ENCODE measurements at regions of chr16 and their contacts with region 1.

Region 1: DNA sequence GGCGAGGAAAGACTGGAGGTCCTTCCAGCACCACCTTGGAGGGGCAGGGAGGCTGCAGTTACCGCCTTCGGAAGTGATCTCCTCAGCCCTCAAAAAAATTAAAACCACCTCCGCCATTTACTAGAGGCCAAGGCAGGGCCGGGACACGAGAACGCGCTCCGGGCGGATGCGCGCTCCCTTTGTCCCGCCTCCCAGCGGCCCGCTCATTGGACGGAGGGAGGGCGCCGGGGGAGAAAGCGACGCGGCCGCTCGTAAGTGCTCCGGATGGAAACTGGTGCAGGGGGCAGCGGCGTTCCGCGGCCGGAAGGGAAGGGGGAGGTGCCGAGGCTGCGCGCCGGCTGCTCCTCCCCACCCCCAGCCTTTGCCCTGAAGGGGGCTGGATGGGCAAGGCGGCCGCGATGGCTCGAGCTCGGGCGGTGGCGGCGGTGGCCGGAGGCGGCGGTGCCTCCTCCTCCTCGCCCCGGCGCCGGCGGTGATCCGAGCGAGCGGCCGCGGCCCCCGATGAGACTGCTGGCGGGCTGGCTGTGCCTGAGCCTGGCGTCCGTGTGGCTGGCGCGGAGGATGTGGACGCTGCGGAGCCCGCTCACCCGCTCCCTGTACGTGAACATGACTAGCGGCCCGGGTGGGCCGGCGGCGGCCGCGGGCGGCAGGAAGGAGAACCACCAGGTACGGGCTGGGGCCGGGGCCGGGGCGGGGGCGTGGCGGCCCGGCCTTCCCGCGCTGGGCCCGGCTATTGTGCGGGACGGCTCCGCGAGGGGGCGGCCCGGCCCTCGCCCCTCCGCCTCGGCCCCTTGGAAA is at the start of gene METTL9:
- DNase-seq: peak; percentile 93 to 97
- ATAC-seq: peak; percentile 93 to 99 (median 95)
- H3K4me3 ChIP-seq: peak within 1 kb of the TSS; percentile 71
- H3K4me3 Mint-ChIP-seq: peak within 1 kb of the TSS; percentile 95
- H3K27ac ChIP-seq: peak within 1 kb of the TSS; percentile 93
- H3K27ac Mint-ChIP-seq: peak within 1 kb of the TSS; percentile 90 to 92
- H3K4me1 ChIP-seq: peaks cover 5% of the 10 kb centered on the region
- H3K4me1 Mint-ChIP-seq: peaks cover 35 to 49% of the 10 kb centered on the region in 2 donors
- H3K27me3 ChIP-seq: no peaks in the 10 kb centered on the region
- H3K27me3 Mint-ChIP-seq: no peaks in the 10 kb centered on the region
- CTCF ChIP-seq: no peak
- total RNA-seq, gene METTL9: 73.1 to 110 (median 85.1) TPM

Region 2: DNA sequence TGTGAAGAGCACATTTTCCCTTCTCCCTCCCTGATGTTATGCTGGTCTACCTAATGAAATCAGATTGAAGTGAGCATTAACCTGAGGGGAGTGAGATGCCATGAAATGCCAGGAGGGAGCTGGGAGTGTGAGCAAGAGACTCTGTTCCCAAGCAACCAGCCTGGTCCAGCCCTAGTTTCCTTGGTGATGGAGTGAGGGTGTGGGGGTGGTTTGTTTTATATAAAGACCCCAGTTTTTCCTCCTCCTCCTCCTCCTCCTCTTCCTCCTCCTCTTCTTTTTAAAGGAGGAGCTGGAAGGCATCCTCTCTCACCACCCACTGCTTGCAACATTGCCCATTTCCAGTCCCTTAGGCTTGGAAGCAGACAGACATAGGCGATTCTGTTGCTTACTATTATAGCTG is 545.8 kb before region 1 on chr16:
- intact Hi-C with region 1: no loop called
- DNase-seq: no peak
- ATAC-seq: no peak
- H3K4me3 ChIP-seq: no peak overlapping the region
- H3K4me3 Mint-ChIP-seq: no peak overlapping the region
- H3K27ac ChIP-seq: no peak overlapping the region
- H3K27ac Mint-ChIP-seq: no peak overlapping the region
- H3K4me1 ChIP-seq: no peaks in the 10 kb centered on the region
- H3K4me1 Mint-ChIP-seq: no peaks in the 10 kb centered on the region
- H3K27me3 ChIP-seq: no peaks in the 10 kb centered on the region
- H3K27me3 Mint-ChIP-seq: peaks cover 15 to 38% of the 10 kb centered on the region in 2 donors
- CTCF ChIP-seq: no peak

Region 3: DNA sequence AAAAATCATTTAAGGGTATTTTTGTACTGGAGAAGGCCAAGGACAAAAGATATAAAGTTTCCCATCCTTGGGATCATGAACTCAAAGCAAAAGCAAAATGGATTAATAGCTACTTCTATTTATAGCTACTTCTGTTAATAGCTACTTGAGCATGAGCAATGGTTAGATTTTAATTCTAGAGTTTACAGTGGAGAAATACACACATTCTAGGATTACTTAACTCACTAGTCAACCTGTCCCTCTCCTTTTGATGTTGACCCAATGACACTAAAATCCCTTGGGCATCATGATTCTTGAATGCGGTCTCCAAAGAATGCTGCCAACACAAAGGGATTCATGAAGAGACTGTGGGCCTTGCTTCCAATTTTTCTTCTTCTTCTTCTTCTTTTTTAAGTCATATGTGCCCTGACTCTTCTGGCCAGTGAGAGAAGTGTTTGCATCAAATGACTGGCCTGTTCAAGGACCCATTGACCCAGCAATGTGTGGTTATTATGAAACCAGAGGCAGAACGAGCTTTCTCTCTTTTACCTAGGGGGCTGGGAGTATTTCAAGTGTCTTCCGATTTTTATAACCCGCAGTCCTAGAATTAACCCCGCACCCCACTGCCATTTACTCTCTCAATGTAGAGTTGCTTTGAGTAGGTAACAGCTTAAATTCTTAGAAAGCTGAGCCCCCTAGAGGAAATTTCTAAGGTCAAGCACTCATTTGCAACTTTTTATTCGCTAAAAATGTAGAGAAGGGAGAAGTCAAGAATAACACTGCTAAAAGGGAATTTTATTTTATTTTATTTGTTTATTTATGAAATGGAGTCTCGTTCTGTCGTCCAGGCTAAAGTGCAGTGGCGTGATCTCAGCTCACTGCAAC is 99.0 kb after region 1 on chr16:
- intact Hi-C with region 1: no loop called
- DNase-seq: no peak
- ATAC-seq: no peak
- H3K4me3 ChIP-seq: no peak overlapping the region
- H3K4me3 Mint-ChIP-seq: no peak overlapping the region
- H3K27ac ChIP-seq: no peak overlapping the region
- H3K27ac Mint-ChIP-seq: no peak overlapping the region
- H3K4me1 ChIP-seq: no peaks in the 10 kb centered on the region
- H3K4me1 Mint-ChIP-seq: no peaks in the 10 kb centered on the region
- H3K27me3 ChIP-seq: no peaks in the 10 kb centered on the region
- H3K27me3 Mint-ChIP-seq: peaks cover 0 to 5% of the 10 kb centered on the region in 2 donors
- CTCF ChIP-seq: no peak

Region 4: GRCh38 chr16:23149349-23149996 is 1550.0 kb after region 1 on chr16 and contains the start of gene USP31:
- intact Hi-C with region 1: loop called (anchors 5 kb)
- DNase-seq: peak; percentile 86 to 94
- ATAC-seq: peak; percentile 94 to 96 (median 96)
- H3K4me3 ChIP-seq: peak within 1 kb of the TSS; percentile 63
- H3K4me3 Mint-ChIP-seq: peak within 1 kb of the TSS; percentile 97
- H3K27ac ChIP-seq: peak within 1 kb of the TSS; percentile 2
- H3K27ac Mint-ChIP-seq: peak within 1 kb of the TSS; percentile 79
- H3K4me1 ChIP-seq: peaks cover 9% of the 10 kb centered on the region
- H3K4me1 Mint-ChIP-seq: peaks cover 17% of the 10 kb centered on the region in 2 donors
- H3K27me3 ChIP-seq: peaks cover 3% of the 10 kb centered on the region
- H3K27me3 Mint-ChIP-seq: peaks cover 4 to 14% of the 10 kb centered on the region in 2 donors
- CTCF ChIP-seq: no peak
- total RNA-seq, gene USP31: 6.1 to 6.6 (median 6.3) TPM

Measured in natural killer cell (primary cell).